Sigmoid colon (tissue), 7 donors: ENCODE measurements at regions of chr11 and their contacts with region 1.

Region 1: GRCh38 chr11:81644239-81644840 is 1089.3 kb downstream of the FAM181B start:
- DNase-seq: no peak
- H3K4me3 ChIP-seq: no peak overlapping the region
- H3K27ac ChIP-seq: no peak overlapping the region
- H3K4me1 ChIP-seq: no peaks in the 10 kb centered on the region
- H3K27me3 ChIP-seq: no peaks in the 10 kb centered on the region
- CTCF ChIP-seq: peak in 3 of 4 experiments; percentile 34 to 50 (median 40)
- EP300 ChIP-seq: no peak
- POLR2A ChIP-seq: no peak

Region 2: DNA sequence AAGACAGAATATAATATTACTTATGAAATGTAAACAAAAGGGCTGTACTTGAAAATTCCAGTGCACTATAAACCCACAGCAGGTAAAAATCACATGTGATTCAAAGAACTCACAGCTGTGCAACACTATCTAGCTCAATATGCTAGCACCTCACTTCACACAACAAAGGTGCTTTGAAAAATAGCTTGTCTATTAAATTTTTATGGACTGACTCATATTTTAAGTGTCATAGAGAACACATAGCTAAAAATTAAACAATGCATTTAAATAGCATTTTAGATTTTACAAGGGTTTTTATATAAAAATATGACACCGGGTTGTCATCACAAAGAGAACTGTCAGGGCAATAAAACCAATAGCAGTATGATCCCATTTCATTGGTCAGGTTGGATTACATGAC is 813.0 kb before region 1 on chr11:
- intact Hi-C with region 1: no loop called
- DNase-seq: no peak
- H3K4me3 ChIP-seq: no peak overlapping the region
- H3K27ac ChIP-seq: no peak overlapping the region
- H3K4me1 ChIP-seq: no peaks in the 10 kb centered on the region
- H3K27me3 ChIP-seq: no peaks in the 10 kb centered on the region
- CTCF ChIP-seq: no peak
- EP300 ChIP-seq: no peak
- POLR2A ChIP-seq: no peak

Region 3: GRCh38 chr11:82682003-82682751 is 1037.8 kb after region 1 on chr11:
- intact Hi-C with region 1: loop called (anchors 10 kb)
- DNase-seq: no peak
- H3K4me3 ChIP-seq: no peak overlapping the region
- H3K27ac ChIP-seq: no peak overlapping the region
- H3K4me1 ChIP-seq: no peaks in the 10 kb centered on the region
- H3K27me3 ChIP-seq: no peaks in the 10 kb centered on the region
- CTCF ChIP-seq: peak in 3 of 4 experiments; percentile 53 to 58 (median 56)
- EP300 ChIP-seq: no peak
- POLR2A ChIP-seq: no peak